Ovary (tissue), 10 donors: ENCODE measurements at regions of chr11 and their contacts with region 1.

Region 1: DNA sequence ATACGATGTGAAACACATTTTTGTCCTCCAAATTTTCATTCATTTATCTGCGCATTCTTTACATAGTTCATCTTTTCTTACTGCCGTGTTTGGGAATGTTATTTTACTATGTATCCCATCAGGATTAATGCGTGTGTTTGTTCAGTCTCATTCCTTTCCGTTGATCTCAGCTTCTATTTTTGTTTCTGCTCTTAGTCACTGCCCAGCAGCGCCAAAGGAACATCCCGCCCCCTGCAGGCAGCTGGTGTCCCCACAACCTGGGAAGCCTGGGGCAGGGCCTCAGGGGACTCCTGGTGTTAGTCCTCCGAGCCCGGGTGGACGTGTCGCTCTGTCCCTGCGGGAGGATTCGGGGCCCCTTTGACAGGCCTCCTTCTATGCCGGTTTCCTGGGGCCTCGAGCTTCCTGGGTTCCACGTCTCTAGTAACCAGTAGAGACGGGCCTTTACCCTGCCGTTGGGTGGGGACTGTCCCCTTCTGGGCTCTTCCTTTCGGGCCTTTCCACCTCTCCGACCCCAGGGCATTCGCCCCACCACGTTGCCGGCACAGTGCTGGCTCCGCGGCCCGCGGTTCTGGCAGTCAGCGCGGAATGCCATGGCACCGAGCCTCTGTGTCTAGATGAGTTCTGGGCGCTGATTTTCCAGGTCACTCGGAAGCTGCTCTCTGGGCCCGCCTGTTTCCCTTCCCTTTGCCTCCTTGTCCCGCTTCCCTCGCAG is 39.8 kb downstream of the WEE1 start:
- DNase-seq: peak; percentile 90 to 95 (median 94)
- H3K4me3 ChIP-seq: peak overlapping the region; percentile 39
- H3K27ac ChIP-seq: peak overlapping the region; percentile 83 to 89
- H3K4me1 ChIP-seq: no peaks in the 10 kb centered on the region
- H3K27me3 ChIP-seq: no peaks in the 10 kb centered on the region
- CTCF ChIP-seq: peak; percentile 91 to 98 (median 92)
- EP300 ChIP-seq: peak; percentile 83
- POLR2A ChIP-seq: peak; percentile 56

Region 2: DNA sequence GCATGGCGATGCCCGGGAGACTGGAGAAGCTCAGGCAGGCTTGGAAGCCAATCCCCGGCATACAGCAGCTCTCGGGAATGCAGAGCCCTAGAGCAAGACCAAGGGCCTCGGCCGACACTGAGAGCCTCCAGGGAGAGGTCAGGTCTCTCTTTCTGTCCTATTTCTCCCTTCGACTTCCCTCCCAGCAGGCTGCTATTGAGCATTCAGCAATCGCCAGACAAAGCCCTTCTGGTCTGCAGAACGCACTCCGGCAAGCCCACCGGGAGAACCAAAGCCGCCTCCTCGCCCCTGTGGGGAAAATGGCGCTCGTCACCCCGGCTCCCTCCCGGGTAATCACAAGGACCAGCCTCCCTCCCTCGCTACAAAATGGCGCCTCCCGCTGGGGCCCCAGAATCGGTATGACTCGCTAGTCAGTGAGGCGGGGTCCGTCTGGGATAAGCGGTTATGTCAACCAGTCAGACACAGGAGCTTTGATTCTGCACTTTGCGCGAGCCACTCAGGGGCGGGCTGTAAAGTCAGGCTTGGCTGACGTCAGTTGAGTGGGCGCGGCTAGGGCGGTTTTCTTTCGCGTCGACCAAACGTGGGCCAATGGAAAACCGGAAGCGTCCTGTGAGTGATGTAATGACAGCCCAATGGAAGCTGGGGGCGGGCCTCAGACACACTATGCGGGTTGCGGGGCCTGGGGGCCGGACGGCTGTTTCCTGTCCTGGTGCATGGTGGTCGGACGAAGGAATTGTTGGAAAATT is 152.8 kb before region 1 on chr11 and contains the start of gene ZNF143:
- intact Hi-C with region 1: loop called in 2 of 4 experiments (anchors 2 to 5 kb)
- DNase-seq: peak; percentile 100
- H3K4me3 ChIP-seq: peak within 1 kb of the TSS; percentile 98
- H3K27ac ChIP-seq: peak within 1 kb of the TSS; percentile 99 to 100
- H3K4me1 ChIP-seq: peaks cover 7% of the 10 kb centered on the region
- H3K27me3 ChIP-seq: no peaks in the 10 kb centered on the region
- CTCF ChIP-seq: peak in 1 of 3 donors; percentile 20
- EP300 ChIP-seq: peak; percentile 16
- POLR2A ChIP-seq: peak; percentile 98
- total RNA-seq, gene ZNF143: 12.6 to 48.7 (median 32.3) TPM

Region 3: GRCh38 chr11:9573052-9573774 is 40.1 kb before region 1 on chr11 and contains the start of gene WEE1:
- intact Hi-C with region 1: loop called in 2 of 4 experiments (anchors 5 kb)
- DNase-seq: peak; percentile 99
- H3K4me3 ChIP-seq: peak within 1 kb of the TSS; percentile 80
- H3K27ac ChIP-seq: peak within 1 kb of the TSS; percentile 94 to 98
- H3K4me1 ChIP-seq: peaks cover 2% of the 10 kb centered on the region
- H3K27me3 ChIP-seq: no peaks in the 10 kb centered on the region
- CTCF ChIP-seq: no peak
- EP300 ChIP-seq: peak; percentile 52
- POLR2A ChIP-seq: peak; percentile 92
- total RNA-seq, gene WEE1: 10.5 to 55.4 (median 21.6) TPM

Region 4: GRCh38 chr11:9681583-9682372 is 68.5 kb after region 1 on chr11:
- intact Hi-C with region 1: no loop called
- DNase-seq: no peak
- H3K4me3 ChIP-seq: no peak overlapping the region
- H3K27ac ChIP-seq: no peak overlapping the region
- H3K4me1 ChIP-seq: peaks cover 2% of the 10 kb centered on the region
- H3K27me3 ChIP-seq: no peaks in the 10 kb centered on the region
- CTCF ChIP-seq: no peak
- EP300 ChIP-seq: no peak
- POLR2A ChIP-seq: no peak

Region 5: GRCh38 chr11:9757809-9758636 is 144.7 kb after region 1 on chr11:
- intact Hi-C with region 1: loop called in 2 of 4 experiments (anchors 5 to 10 kb)
- DNase-seq: peak; percentile 86 to 92 (median 90)
- H3K4me3 ChIP-seq: peak overlapping the region; percentile 56
- H3K27ac ChIP-seq: peak overlapping the region; percentile 78 to 83
- H3K4me1 ChIP-seq: peaks cover 16% of the 10 kb centered on the region
- H3K27me3 ChIP-seq: no peaks in the 10 kb centered on the region
- CTCF ChIP-seq: peak; percentile 72 to 98 (median 98)
- EP300 ChIP-seq: no peak
- POLR2A ChIP-seq: peak; percentile 41

Region 6: DNA sequence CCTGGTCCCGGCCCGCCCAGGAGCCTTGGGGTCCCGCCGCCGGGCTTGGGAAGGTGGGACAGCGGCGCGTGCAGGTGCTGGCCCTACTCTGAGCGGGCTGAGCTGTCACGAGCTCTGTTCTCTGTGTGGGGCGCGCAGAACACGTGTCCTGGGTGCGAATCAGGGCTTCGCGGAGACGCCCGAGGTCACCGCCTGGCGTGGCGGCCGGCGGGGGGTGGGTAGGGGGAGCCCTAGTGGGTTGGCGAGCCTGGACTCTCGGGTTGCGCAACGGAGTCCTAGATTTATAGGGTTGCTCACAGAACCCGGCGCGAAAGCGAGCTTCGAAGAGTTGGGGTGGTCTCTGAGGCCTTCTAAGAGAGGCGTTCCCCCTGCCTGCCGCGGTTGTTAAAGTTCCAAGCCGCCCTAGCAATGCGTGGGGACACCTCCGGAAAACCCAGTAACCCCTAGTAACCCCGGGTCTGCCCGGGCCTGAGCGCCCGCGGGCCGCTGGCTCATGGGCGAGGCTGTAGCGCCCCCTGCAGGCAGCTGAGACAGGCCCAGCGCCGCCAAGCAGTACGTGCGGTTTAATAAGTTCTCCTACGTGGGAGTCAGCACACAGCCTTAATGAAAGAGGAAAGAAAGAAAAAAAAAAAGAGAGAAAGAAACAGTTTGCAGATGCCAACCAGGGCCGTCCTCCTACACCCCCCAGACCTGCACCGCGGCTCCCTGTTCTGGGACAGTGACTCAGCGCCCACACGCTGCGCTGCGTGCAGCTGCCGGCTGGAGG is 694.4 kb after region 1 on chr11:
- intact Hi-C with region 1: loop called in 1 of 4 experiments (anchors 5 kb)
- DNase-seq: peak; percentile 85 to 92 (median 90)
- H3K4me3 ChIP-seq: peak overlapping the region; percentile 70
- H3K27ac ChIP-seq: peak overlapping the region in 1 of 2 donors; percentile 76
- H3K4me1 ChIP-seq: peaks cover 10% of the 10 kb centered on the region
- H3K27me3 ChIP-seq: no peaks in the 10 kb centered on the region
- CTCF ChIP-seq: peak; percentile 96 to 98 (median 98)
- EP300 ChIP-seq: no peak
- POLR2A ChIP-seq: no peak